Heart left ventricle (tissue), 16 donors: ENCODE measurements at regions of chr12 and their contacts with region 1.

Region 1: DNA sequence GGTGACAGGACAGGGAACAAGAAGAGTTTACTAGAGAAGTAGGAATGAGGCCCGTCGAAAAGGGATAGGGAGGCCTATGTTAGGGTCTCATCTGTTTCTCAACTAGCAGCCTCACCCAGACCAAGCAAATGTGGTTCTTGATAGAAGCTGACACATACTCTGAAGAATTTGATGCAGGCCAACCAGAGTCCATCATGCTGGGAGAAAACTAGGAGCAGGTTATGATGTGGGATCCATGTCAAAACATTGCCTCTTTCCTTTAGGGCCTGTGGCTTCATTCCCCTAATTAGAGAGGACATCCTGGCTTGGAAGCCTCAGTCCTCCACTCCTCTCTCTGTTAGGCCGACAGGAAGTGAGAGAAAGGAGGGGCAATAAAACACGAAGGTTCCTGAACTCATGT is 122.8 kb downstream of the NTF3 start:
- DNase-seq: no peak
- ATAC-seq: peak in 1 of 4 donors; percentile 32
- H3K4me3 ChIP-seq: no peak overlapping the region
- H3K27ac ChIP-seq: no peak overlapping the region
- H3K4me1 ChIP-seq: no peaks in the 10 kb centered on the region
- H3K27me3 ChIP-seq: no peaks in the 10 kb centered on the region
- CTCF ChIP-seq: no peak
- POLR2A ChIP-seq: no peak

Region 2: DNA sequence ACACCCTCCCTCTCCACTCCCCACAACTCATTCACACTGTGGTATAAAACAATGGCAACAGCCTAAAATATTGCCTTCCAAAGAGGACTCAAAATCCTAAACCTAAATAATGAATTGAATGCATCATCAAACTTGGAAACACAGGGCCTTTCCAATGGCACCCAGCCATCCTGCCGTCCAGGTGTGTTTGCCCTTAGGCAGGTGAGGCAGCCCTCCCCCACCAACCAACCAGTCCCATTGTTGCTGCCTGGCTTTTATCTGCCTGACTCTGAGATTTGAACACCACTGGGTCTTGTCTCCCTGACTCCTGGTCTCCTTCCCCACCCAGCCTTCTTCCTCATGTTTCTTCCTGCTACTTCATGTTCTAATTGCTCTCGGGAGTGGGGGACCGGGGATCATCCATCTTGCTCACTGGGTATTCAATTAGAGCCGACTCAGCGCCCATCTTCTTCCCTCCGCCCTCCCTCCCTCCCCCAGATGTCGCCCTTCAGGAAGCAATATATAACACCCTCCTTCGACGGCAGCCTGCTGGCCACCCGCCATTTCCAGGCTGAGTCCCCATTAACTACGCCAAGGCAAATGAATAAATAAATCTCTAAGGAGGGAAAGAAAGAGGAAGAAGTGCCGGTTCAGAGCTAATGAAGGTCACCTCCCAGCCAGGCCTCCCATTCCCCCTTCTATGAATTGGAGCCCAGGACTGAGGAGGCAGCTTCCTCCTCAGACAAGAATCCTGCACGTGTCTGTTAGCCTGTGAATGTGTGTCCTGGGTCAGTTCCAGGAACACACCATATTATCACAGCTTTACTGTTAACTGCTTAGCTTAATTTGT is 159.1 kb before region 1 on chr12:
- intact Hi-C with region 1: no loop called
- DNase-seq: no peak
- ATAC-seq: no peak
- H3K4me3 ChIP-seq: no peak overlapping the region
- H3K27ac ChIP-seq: no peak overlapping the region
- H3K4me1 ChIP-seq: no peaks in the 10 kb centered on the region
- H3K27me3 ChIP-seq: peaks cover 0 to 35% (median 0%) of the 10 kb centered on the region in 9 donors
- CTCF ChIP-seq: no peak
- POLR2A ChIP-seq: no peak

Region 3: DNA sequence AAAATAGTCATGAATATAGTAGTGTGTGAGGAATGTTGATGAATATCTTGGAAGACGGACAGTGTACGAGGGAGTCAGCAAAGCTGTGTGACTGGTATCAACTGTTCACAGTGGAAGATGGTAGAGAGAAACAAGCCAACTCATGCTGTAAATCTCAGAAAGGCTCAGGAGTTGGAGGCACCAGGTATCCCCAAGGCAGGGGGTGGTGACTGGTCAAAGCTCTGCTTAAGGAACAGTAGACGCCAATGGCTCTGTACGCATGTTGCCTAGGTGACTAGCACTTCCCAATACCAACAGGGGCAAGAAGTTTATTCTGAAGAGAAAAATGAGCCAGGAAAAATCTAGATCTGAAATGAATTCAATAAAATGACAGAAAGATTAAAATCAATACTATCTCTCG is 47.1 kb after region 1 on chr12:
- intact Hi-C with region 1: loop called in 1 of 10 experiments (anchors 5 kb)
- DNase-seq: no peak
- ATAC-seq: no peak
- H3K4me3 ChIP-seq: no peak overlapping the region
- H3K27ac ChIP-seq: no peak overlapping the region
- H3K4me1 ChIP-seq: no peaks in the 10 kb centered on the region
- H3K27me3 ChIP-seq: no peaks in the 10 kb centered on the region
- CTCF ChIP-seq: no peak
- POLR2A ChIP-seq: no peak